ENCODE measurements at regions of chr7 and their contacts with region 1.

Region 1: GRCh38 chr7:2471396-2471795 is 4.8 kb downstream of the GRIFIN start:
- DNase-seq: no peak
- ATAC-seq: no peak
- H3K4me3 ChIP-seq: no peak overlapping the region
- H3K4me3 Mint-ChIP-seq: no peak overlapping the region
- H3K27ac ChIP-seq: no peak overlapping the region
- H3K27ac Mint-ChIP-seq: no peak overlapping the region
- H3K4me1 ChIP-seq: no peaks in the 10 kb centered on the region
- H3K4me1 Mint-ChIP-seq: peaks cover 2 to 6% (median 5%) of the 10 kb centered on the region in 7 donors
- H3K27me3 ChIP-seq: no peaks in the 10 kb centered on the region
- H3K27me3 Mint-ChIP-seq: peaks cover 0 to 13% (median 4%) of the 10 kb centered on the region in 5 donors

Region 2: GRCh38 chr7:2241580-2242540 is 229.5 kb before region 1 on chr7 and contains the starts of genes MRM2 and NUDT1:
- CTCF ChIA-PET with region 1: interaction called, 10 read pairs
- POLR2A ChIA-PET with region 1: no interaction called
- intact Hi-C with region 1: no loop called
- DNase-seq: peak; percentile 36 to 89 (median 53)
- ATAC-seq: peak; percentile 72
- H3K4me3 ChIP-seq: peak within 1 kb of the TSS; percentile 81
- H3K4me3 Mint-ChIP-seq: peak within 1 kb of the TSS; percentile 84 to 98 (median 90)
- H3K27ac ChIP-seq: peak within 1 kb of the TSS; percentile 86
- H3K27ac Mint-ChIP-seq: peak within 1 kb of the TSS; percentile 83 to 98 (median 89)
- H3K4me1 ChIP-seq: peaks cover 0 to 5% of the 10 kb centered on the region in 2 donors
- H3K4me1 Mint-ChIP-seq: peaks cover 6 to 37% (median 19%) of the 10 kb centered on the region in 7 donors
- H3K27me3 ChIP-seq: no peaks in the 10 kb centered on the region
- H3K27me3 Mint-ChIP-seq: no peaks in the 10 kb centered on the region
- total RNA-seq, gene MRM2: 7.1 to 30.7 (median 20.0) TPM
- total RNA-seq, gene NUDT1: 14.0 to 77.7 (median 22.6) TPM

Region 3: GRCh38 chr7:3778345-3778744 is 1306.9 kb after region 1 on chr7:
- CTCF ChIA-PET with region 1: no interaction called
- POLR2A ChIA-PET with region 1: no interaction called
- intact Hi-C with region 1: no loop called
- DNase-seq: no peak
- ATAC-seq: no peak
- H3K4me3 ChIP-seq: no peak overlapping the region
- H3K4me3 Mint-ChIP-seq: no peak overlapping the region
- H3K27ac ChIP-seq: no peak overlapping the region
- H3K27ac Mint-ChIP-seq: no peak overlapping the region
- H3K4me1 ChIP-seq: no peaks in the 10 kb centered on the region
- H3K4me1 Mint-ChIP-seq: no peaks in the 10 kb centered on the region
- H3K27me3 ChIP-seq: no peaks in the 10 kb centered on the region
- H3K27me3 Mint-ChIP-seq: peaks cover 0 to 16% (median 2%) of the 10 kb centered on the region in 5 donors

Measured in naive thymus-derived CD4-positive, alpha-beta T cell (primary cell).